Activated CD4-positive, alpha-beta T cell treated with anti-CD3 and anti-CD28 coated beads, Interleukin-2, amount 10 ng/mL, durations not matched to agents 24 days and 14 days (primary cell): ENCODE measurements at regions of chr1 and their contacts with region 1.

Region 1: DNA sequence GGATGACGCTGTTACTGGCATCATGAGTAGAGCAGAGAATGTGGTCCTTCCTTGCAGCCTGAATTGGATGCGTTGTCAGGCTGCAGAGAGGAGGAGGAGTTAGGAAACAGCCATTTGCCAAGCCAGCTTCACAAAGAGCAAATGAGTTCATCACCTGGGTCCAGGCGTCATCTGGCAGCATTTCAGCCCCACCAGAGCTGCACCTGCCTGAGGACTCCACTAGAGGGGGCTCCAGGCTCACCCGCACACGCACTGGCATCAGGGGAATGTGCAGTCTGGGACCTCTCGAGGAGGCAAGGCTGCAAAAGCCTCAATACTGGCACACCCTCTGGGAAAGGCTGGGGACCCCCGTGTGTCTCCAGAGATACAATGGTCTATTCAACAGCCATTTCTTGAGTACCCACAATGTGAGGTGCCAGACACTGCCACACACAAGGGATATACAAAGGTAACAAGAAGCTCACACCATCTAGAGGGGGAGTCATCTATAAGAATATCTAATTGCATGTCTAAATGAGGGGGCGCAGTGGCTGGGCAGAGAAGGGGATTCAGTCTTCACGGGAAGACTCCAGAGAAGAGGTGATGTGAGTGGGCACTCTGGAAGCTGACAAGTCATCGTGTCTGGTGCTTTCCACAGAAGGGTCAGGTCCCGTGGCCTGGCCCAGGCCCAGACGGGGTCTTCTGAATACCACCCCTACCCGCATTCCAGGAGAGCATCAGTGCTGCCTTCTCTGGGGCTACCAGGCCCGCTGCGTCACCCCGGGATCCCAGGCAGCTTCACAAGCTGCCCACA is 53.5 kb upstream of the CNTN2 start:
- DNase-seq: peak; percentile 89
- H3K4me3 Mint-ChIP-seq: no peak overlapping the region
- H3K27ac Mint-ChIP-seq: no peak overlapping the region
- H3K4me1 Mint-ChIP-seq: peaks cover 11% of the 10 kb centered on the region
- H3K27me3 Mint-ChIP-seq: peaks cover 2% of the 10 kb centered on the region

Region 2: GRCh38 chr1:204746838-204747442 is 242.5 kb before region 1 on chr1:
- intact Hi-C with region 1: no loop called
- DNase-seq: peak; percentile 85
- H3K4me3 Mint-ChIP-seq: no peak overlapping the region
- H3K27ac Mint-ChIP-seq: no peak overlapping the region
- H3K4me1 Mint-ChIP-seq: peaks cover 2% of the 10 kb centered on the region
- H3K27me3 Mint-ChIP-seq: peaks cover 23% of the 10 kb centered on the region

Region 3: DNA sequence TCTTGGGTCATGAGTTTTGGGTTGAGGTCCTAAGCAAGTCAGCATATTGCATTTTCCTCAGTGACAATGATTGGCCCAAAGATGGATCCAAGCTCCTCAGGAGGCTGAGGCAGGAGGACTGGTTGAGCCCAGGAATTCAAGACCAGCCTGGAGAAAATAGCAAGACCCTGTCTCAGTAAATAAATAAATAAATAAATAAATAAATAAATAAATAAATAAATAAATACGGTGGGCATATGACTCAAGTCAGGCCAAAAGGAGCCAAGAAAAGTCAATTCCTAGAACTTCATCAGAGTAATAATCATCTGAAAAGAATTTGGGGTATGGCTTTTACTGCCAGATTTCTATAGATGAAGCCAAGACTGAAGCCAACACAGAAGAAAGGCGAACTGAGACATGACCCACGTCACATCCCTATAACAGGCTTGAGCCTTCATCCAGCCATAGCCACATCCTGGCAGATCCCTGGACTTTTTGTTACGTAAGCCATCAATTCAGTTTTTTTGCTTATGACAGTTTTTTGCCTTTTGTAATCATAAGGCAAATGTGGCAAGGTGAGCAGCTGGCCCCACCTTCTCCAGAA is 207.3 kb before region 1 on chr1:
- intact Hi-C with region 1: no loop called
- DNase-seq: no peak
- H3K4me3 Mint-ChIP-seq: no peak overlapping the region
- H3K27ac Mint-ChIP-seq: no peak overlapping the region
- H3K4me1 Mint-ChIP-seq: no peaks in the 10 kb centered on the region
- H3K27me3 Mint-ChIP-seq: peaks cover 29% of the 10 kb centered on the region

Region 4: GRCh38 chr1:205061665-205062069 is 72.2 kb after region 1 on chr1:
- intact Hi-C with region 1: loop called (anchors 1 kb)
- DNase-seq: peak; percentile 92
- H3K4me3 Mint-ChIP-seq: no peak overlapping the region
- H3K27ac Mint-ChIP-seq: no peak overlapping the region
- H3K4me1 Mint-ChIP-seq: no peaks in the 10 kb centered on the region
- H3K27me3 Mint-ChIP-seq: peaks cover 1% of the 10 kb centered on the region

Region 5: GRCh38 chr1:205141236-205142101 is 152.0 kb after region 1 on chr1:
- intact Hi-C with region 1: loop called (anchors 5 kb)
- DNase-seq: peak; percentile 92
- H3K4me3 Mint-ChIP-seq: no peak overlapping the region
- H3K27ac Mint-ChIP-seq: no peak overlapping the region
- H3K4me1 Mint-ChIP-seq: peaks cover 6% of the 10 kb centered on the region
- H3K27me3 Mint-ChIP-seq: no peaks in the 10 kb centered on the region

Region 6: GRCh38 chr1:205255941-205256780 is 266.7 kb after region 1 on chr1:
- intact Hi-C with region 1: loop called (anchors 1 kb)
- DNase-seq: peak; percentile 96
- H3K4me3 Mint-ChIP-seq: no peak overlapping the region
- H3K27ac Mint-ChIP-seq: no peak overlapping the region
- H3K4me1 Mint-ChIP-seq: peaks cover 5% of the 10 kb centered on the region
- H3K27me3 Mint-ChIP-seq: no peaks in the 10 kb centered on the region